ENCODE measurements at regions of chr1 and their contacts with region 1.

Region 1: DNA sequence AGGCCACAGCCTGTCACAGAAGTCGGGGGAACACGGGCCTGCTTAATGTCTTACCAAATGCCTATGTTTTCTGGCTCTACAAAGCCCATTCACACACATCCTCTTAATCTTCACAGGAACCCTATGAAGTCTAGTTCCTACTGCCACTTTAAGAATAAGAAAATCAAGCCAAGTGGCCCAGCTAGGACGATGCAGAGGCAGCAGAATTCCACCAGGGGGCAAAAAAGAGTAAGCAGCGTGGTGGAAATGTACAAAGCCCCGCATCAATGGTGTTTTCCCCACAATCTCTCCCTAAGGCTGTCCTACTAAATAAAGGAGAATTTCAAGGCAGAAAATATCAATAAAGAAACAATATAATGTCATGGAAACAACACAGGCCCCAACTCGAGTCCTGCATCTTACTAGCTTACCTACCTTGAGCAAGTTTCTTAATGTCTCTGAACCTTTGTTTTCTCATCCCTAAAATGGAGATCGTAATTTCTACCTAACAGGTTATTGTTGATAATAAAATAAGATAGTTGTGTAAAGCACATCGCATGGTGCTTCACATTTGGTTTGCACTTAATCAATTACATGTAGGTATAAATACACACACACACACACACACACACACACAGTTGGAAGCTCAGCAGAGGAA is 21.4 kb downstream of the SEC16B start:
- DNase-seq: peak; percentile 75
- H3K4me3 ChIP-seq: no peak overlapping the region
- H3K27ac ChIP-seq: no peak overlapping the region
- H3K4me1 ChIP-seq: no peaks in the 10 kb centered on the region
- H3K27me3 ChIP-seq: no peaks in the 10 kb centered on the region
- CTCF ChIP-seq: peak; percentile 86 to 94
- POLR2A ChIP-seq: no peak

Region 2: GRCh38 chr1:176949033-176949662 is 999.3 kb before region 1 on chr1:
- CTCF ChIA-PET with region 1: no interaction called
- POLR2A ChIA-PET with region 1: no interaction called
- dilution Hi-C with region 1: no loop called
- intact Hi-C with region 1: loop called (anchors 1 kb)
- DNase-seq: peak; percentile 2
- H3K4me3 ChIP-seq: no peak overlapping the region
- H3K27ac ChIP-seq: no peak overlapping the region
- H3K4me1 ChIP-seq: no peaks in the 10 kb centered on the region
- H3K27me3 ChIP-seq: no peaks in the 10 kb centered on the region
- CTCF ChIP-seq: peak; percentile 28 to 42
- POLR2A ChIP-seq: no peak

Region 3: DNA sequence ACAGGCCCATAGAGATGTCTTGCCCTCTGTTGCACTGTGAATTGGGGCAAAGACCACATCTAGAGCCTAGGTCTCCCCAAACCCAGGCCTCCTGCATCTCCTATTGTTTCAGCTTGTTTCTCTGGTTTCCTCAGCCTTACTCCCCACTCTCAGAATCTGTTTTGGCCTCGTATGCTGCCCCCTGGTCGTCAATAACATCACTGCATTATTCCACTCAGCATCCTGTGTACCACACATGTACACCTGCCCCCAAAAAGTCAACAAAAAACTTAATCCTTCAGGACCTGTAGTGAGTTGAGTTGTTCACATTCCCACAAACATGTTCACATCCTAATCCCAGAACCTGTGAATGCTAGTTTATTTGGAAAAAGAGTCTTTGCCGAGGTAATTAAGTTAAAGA is 592.9 kb before region 1 on chr1:
- CTCF ChIA-PET with region 1: interaction called, 3 read pairs
- POLR2A ChIA-PET with region 1: no interaction called
- dilution Hi-C with region 1: no loop called
- intact Hi-C with region 1: loop called (anchors 10 kb)
- DNase-seq: peak; percentile 6
- H3K4me3 ChIP-seq: no peak overlapping the region
- H3K27ac ChIP-seq: no peak overlapping the region
- H3K4me1 ChIP-seq: no peaks in the 10 kb centered on the region
- H3K27me3 ChIP-seq: no peaks in the 10 kb centered on the region
- CTCF ChIP-seq: peak; percentile 12 to 21
- POLR2A ChIP-seq: no peak

Region 4: DNA sequence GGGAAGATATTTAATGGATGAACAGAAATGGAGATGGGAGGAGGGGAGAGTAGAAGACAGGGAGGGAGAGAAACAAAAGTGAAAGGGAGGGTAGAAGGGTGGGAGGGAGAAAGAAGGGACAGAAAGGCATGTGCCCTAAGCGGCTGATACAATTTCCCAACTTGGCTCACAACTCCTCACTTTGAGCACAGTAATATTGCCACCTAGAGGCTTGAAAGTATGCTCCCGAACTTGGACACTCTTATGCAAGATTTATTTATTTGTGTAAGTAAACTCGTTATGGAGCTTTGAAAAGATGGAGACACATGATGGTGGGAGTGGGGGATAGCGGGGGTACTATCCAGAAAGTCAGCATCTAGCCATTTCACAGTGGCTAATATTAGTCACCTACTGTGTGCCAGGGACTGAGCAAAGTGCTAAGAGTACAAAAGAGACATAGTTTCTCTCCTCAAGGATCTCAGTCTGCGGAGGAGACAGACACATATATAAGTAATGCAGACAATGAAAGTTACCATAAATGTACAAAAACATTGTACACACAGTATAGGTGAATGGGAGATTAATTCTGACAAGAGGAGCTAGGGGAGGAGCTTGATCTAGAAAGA is 168.3 kb before region 1 on chr1:
- CTCF ChIA-PET with region 1: interaction called, 5 read pairs
- POLR2A ChIA-PET with region 1: no interaction called
- dilution Hi-C with region 1: no loop called
- intact Hi-C with region 1: loop called (anchors 2 kb)
- DNase-seq: peak; percentile 45
- H3K4me3 ChIP-seq: no peak overlapping the region
- H3K27ac ChIP-seq: no peak overlapping the region
- H3K4me1 ChIP-seq: peaks cover 4% of the 10 kb centered on the region
- H3K27me3 ChIP-seq: no peaks in the 10 kb centered on the region
- CTCF ChIP-seq: peak in 1 of 2 donors; percentile 19
- POLR2A ChIP-seq: no peak

Region 5: GRCh38 chr1:178075333-178075732 is 126.9 kb after region 1 on chr1:
- CTCF ChIA-PET with region 1: no interaction called
- POLR2A ChIA-PET with region 1: no interaction called
- dilution Hi-C with region 1: no loop called
- intact Hi-C with region 1: no loop called
- DNase-seq: no peak
- H3K4me3 ChIP-seq: no peak overlapping the region
- H3K27ac ChIP-seq: no peak overlapping the region
- H3K4me1 ChIP-seq: no peaks in the 10 kb centered on the region
- H3K27me3 ChIP-seq: no peaks in the 10 kb centered on the region
- CTCF ChIP-seq: no peak
- POLR2A ChIP-seq: no peak

Region 6: DNA sequence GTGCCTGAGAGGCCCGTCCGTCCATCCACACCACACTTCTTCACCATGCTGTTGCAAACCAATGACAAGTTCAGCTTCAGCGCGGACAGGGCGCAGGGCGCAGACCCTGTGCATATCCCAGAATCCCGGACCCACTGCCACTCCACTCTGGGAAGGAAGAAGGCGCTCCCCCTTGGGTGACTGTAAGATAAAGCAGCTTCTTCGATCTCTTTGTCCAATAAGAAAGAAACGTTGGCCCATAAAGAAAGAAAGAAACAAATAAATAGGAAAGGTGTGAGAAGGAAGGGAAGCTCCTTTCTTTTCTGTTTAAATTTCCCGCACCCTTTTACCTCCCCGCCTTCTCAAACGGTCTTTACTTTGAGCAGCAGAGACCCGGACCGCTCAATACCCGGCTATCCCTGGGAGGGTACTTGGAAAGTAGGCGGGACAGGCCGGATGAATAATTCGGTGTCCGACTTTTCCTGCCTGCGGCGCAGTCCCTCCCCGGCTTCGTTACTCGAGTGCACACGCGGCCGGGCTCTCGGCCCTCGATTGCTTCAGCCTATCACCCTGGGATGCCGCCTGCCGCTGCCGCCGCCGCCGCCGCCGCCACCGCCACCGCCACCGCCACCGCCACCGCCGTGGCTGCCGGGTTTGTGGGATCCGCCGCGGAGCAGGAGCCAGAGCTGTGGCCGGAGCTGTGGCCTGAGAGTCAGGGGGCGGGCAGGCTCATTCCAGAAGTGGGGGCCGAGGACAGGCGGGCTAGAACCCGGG is 144.9 kb after region 1 on chr1:
- CTCF ChIA-PET with region 1: interaction called, 7 read pairs
- POLR2A ChIA-PET with region 1: no interaction called
- dilution Hi-C with region 1: no loop called
- intact Hi-C with region 1: loop called (anchors 5 kb)
- DNase-seq: peak; percentile 96
- H3K4me3 ChIP-seq: peak overlapping the region; percentile 48 to 93 (median 88)
- H3K27ac ChIP-seq: peak overlapping the region; percentile 68
- H3K4me1 ChIP-seq: peaks cover 25% of the 10 kb centered on the region
- H3K27me3 ChIP-seq: no peaks in the 10 kb centered on the region
- CTCF ChIP-seq: peak in 1 of 2 donors; percentile 10
- POLR2A ChIP-seq: peak; percentile 73

Region 7: DNA sequence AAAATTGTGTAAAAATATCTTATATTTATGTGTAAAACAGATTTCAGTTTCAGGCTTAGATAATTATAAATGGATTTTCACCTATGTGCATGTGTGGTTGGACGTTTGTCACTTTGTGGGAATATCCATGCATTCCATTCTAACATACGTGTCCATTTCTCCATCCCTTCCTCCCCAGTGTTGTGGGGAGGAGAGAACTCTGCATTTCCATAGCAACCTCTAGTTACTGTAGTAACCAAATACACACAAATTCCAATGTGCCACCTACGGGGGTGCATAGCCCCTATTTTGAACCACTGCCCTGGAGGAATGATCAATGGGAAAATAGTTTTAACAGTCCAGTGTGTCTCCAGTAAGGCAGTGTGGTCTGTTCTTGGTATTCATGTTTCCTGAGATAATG is 224.5 kb after region 1 on chr1:
- CTCF ChIA-PET with region 1: no interaction called
- POLR2A ChIA-PET with region 1: no interaction called
- dilution Hi-C with region 1: no loop called
- intact Hi-C with region 1: no loop called
- DNase-seq: no peak
- H3K4me3 ChIP-seq: no peak overlapping the region
- H3K27ac ChIP-seq: no peak overlapping the region
- H3K4me1 ChIP-seq: peaks cover 4% of the 10 kb centered on the region
- H3K27me3 ChIP-seq: no peaks in the 10 kb centered on the region
- CTCF ChIP-seq: no peak
- POLR2A ChIP-seq: no peak

Region 8: GRCh38 chr1:178300352-178300699 is 351.9 kb after region 1 on chr1:
- CTCF ChIA-PET with region 1: interaction called, 7 read pairs
- POLR2A ChIA-PET with region 1: no interaction called
- dilution Hi-C with region 1: no loop called
- intact Hi-C with region 1: loop called (anchors 1 kb)
- DNase-seq: no peak
- H3K4me3 ChIP-seq: no peak overlapping the region
- H3K27ac ChIP-seq: no peak overlapping the region
- H3K4me1 ChIP-seq: peaks cover 10% of the 10 kb centered on the region
- H3K27me3 ChIP-seq: no peaks in the 10 kb centered on the region
- CTCF ChIP-seq: no peak
- POLR2A ChIP-seq: no peak